ENCODE measurements at regions of chr20 and their contacts with region 1.

Region 1: DNA sequence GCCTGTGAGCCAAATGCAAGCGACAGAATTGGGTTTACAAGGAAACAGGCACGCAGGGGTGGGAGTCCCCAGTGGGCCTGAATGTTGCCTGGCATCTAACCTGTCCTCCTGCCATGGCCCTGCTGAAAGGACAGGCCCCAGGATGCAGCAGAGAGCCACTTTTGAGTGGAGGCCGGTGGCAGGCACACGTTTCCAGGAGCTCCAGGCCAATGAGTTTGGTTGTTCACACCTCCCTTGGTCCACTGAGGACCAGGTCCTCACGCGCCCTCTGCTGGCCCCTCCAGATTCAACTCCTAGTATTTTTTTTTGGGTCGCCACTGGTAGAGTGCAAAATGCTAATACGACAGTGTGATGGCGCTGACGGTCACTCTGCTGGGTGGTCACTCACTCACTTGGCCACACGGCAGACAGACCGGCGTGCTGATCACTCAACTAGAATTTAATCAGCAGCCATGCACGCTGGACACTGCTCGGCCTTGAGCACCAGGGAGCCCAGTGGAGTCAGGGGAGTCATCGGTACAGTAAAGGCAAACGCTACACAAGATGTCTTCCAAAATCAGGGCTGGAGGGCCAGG is 81.7 kb upstream of the NFATC2 start:
- DNase-seq: peak; percentile 55
- ATAC-seq: peak; percentile 64
- H3K4me3 Mint-ChIP-seq: no peak overlapping the region
- H3K27ac Mint-ChIP-seq: no peak overlapping the region
- H3K4me1 Mint-ChIP-seq: peaks cover 2% of the 10 kb centered on the region
- H3K27me3 Mint-ChIP-seq: peaks cover 18% of the 10 kb centered on the region
- CTCF ChIP-seq: no peak

Region 2: GRCh38 chr20:51220293-51220706 is 403.9 kb before region 1 on chr20:
- CTCF ChIA-PET with region 1: no interaction called
- POLR2A ChIA-PET with region 1: no interaction called
- intact Hi-C with region 1: loop called (anchors 10 kb)
- DNase-seq: peak; percentile 22
- ATAC-seq: no peak
- H3K4me3 Mint-ChIP-seq: no peak overlapping the region
- H3K27ac Mint-ChIP-seq: no peak overlapping the region
- H3K4me1 Mint-ChIP-seq: peaks cover 18% of the 10 kb centered on the region
- H3K27me3 Mint-ChIP-seq: peaks cover 23% of the 10 kb centered on the region
- CTCF ChIP-seq: no peak

Region 3: GRCh38 chr20:51306503-51307358 is 317.5 kb before region 1 on chr20:
- CTCF ChIA-PET with region 1: interaction called, 3 read pairs
- POLR2A ChIA-PET with region 1: no interaction called
- intact Hi-C with region 1: loop called (anchors 2 kb)
- DNase-seq: peak; percentile 65
- ATAC-seq: peak; percentile 98
- H3K4me3 Mint-ChIP-seq: no peak overlapping the region
- H3K27ac Mint-ChIP-seq: no peak overlapping the region
- H3K4me1 Mint-ChIP-seq: no peaks in the 10 kb centered on the region
- H3K27me3 Mint-ChIP-seq: peaks cover 25% of the 10 kb centered on the region
- CTCF ChIP-seq: no peak

Region 4: DNA sequence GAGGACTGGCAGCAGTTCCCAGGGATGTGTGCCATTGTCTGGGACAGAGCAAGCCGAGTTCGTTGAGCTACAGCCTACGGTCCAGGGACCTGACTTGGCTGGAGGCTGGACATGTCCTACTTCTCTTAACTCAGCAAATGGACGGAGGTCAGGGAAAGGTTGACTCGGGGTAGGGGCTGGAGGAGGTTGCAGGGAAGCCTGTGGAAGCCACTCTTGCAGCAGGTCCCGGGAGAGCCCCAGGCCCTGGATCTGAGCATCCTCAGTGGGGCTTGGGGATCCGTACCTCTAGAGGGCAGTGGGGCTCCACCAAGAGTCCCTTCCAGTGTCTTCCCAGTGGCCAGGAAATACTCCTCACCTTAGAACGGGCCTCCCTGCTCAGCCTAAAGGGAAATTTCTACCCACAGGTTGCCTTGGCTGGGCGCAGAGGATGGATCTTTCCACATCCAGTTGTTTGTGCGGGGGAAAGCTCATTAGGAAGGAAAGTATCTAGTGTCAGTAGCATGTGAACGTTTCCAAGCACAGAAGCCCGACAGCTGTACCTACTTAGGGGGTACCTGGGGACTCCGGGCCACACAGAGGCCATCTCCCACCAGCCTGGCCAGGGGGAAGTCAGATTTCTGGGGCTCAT is 252.0 kb before region 1 on chr20:
- CTCF ChIA-PET with region 1: interaction called, 11 read pairs
- POLR2A ChIA-PET with region 1: no interaction called
- intact Hi-C with region 1: loop called (anchors 1 kb)
- DNase-seq: peak; percentile 42
- ATAC-seq: peak; percentile 62
- H3K4me3 Mint-ChIP-seq: no peak overlapping the region
- H3K27ac Mint-ChIP-seq: no peak overlapping the region
- H3K4me1 Mint-ChIP-seq: peaks cover 4% of the 10 kb centered on the region
- H3K27me3 Mint-ChIP-seq: peaks cover 5% of the 10 kb centered on the region
- CTCF ChIP-seq: peak; percentile 38

Region 5: GRCh38 chr20:51385646-51386530 is 238.4 kb before region 1 on chr20:
- CTCF ChIA-PET with region 1: interaction called, 5 read pairs
- POLR2A ChIA-PET with region 1: interaction called, 3 read pairs
- intact Hi-C with region 1: loop called (anchors 1 kb)
- DNase-seq: no peak
- ATAC-seq: peak; percentile 65
- H3K4me3 Mint-ChIP-seq: no peak overlapping the region
- H3K27ac Mint-ChIP-seq: peak overlapping the region; percentile 62
- H3K4me1 Mint-ChIP-seq: peaks cover 42% of the 10 kb centered on the region
- H3K27me3 Mint-ChIP-seq: no peaks in the 10 kb centered on the region
- CTCF ChIP-seq: no peak

Region 6: DNA sequence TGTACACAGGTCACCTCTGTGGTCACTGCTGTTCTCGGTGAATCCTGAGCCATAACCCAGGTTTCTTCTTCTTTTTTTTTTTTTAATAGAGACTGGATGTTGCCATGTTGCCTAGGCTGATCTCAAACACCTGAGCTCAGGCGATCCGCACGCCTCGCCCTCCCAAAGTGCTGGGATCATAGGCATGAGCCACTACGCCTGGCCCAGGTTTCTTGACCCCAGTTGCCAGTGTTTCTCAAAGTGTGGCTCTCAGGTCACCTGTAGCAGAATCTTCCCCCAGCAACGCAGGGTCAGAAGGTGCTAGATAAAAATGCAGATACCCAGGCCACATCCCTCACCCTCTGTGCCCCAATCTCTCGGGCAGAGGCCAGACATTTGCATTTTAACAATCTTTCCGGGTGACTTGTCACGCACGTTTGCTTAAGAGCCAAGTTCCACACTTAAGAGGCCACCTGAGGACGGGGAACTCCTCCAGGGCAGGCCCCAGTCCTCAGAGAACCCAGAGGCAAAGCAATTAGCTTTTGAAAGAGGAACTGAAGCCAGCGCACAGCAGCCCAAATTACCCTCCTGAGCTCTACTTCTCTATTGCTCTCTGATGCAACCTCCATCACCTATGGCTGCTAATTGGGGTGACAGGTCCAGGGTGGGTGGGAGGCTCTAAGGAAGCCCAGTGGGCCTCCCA is 163.5 kb before region 1 on chr20:
- CTCF ChIA-PET with region 1: no interaction called
- POLR2A ChIA-PET with region 1: no interaction called
- intact Hi-C with region 1: no loop called
- DNase-seq: peak; percentile 55
- ATAC-seq: peak; percentile 91
- H3K4me3 Mint-ChIP-seq: peak overlapping the region; percentile 68
- H3K27ac Mint-ChIP-seq: peak overlapping the region; percentile 95
- H3K4me1 Mint-ChIP-seq: peaks cover 66% of the 10 kb centered on the region
- H3K27me3 Mint-ChIP-seq: no peaks in the 10 kb centered on the region
- CTCF ChIP-seq: no peak